ENCODE measurements at regions of chr1 and their contacts with region 1.

Region 1: DNA sequence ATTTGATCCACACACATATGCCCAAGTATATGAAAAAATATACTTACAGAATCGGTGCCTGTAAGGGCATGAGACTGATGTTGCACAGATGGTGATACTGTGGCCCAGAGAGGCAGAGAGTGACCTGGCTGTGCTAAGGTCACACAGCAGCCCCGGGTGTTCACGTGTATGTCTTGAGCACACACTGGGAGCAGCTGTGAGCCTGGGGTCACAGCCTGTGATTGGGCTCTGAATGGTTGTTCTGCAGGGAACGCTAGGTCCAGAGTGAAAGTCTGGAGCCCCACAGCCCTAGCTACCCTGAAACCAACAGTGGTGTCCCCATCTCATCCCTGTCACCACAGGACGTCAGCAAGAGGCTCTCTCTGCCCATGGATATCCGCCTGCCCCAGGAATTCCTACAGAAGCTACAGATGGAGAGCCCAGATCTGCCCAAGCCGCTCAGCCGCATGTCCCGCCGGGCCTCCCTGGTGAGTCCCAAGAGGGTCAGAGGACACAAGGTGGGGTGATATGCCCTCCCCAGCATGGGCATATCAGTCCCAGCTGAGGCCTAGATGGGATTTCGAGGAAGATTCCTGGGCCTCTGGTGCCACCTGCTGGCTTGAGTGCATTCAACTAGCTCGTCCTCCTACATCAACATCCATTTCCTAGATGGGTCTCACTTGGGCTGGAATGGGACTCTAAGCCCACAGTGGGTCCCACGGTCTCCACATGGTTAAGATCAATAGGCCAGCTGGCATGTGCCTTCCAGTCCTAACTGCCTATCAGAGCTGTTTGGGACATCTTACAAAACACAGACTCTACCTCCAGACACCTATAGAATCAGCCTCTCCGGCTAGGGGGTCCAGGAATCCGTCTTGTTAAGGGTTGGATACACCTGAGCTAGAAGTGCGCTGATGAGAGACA is 19.7 kb downstream of the CDK18 start:
- DNase-seq: peak; percentile 38
- H3K4me3 Mint-ChIP-seq: no peak overlapping the region
- H3K27ac Mint-ChIP-seq: no peak overlapping the region
- H3K4me1 Mint-ChIP-seq: no peaks in the 10 kb centered on the region
- H3K27me3 Mint-ChIP-seq: no peaks in the 10 kb centered on the region

Region 2: GRCh38 chr1:205248793-205249601 is 275.1 kb before region 1 on chr1:
- intact Hi-C with region 1: no loop called
- DNase-seq: no peak
- H3K4me3 Mint-ChIP-seq: no peak overlapping the region
- H3K27ac Mint-ChIP-seq: no peak overlapping the region
- H3K4me1 Mint-ChIP-seq: peaks cover 18% of the 10 kb centered on the region
- H3K27me3 Mint-ChIP-seq: no peaks in the 10 kb centered on the region

Region 3: GRCh38 chr1:205354259-205354904 is 169.8 kb before region 1 on chr1:
- intact Hi-C with region 1: loop called (anchors 2 kb)
- DNase-seq: peak; percentile 24
- H3K4me3 Mint-ChIP-seq: no peak overlapping the region
- H3K27ac Mint-ChIP-seq: no peak overlapping the region
- H3K4me1 Mint-ChIP-seq: no peaks in the 10 kb centered on the region
- H3K27me3 Mint-ChIP-seq: peaks cover 15% of the 10 kb centered on the region

Region 4: DNA sequence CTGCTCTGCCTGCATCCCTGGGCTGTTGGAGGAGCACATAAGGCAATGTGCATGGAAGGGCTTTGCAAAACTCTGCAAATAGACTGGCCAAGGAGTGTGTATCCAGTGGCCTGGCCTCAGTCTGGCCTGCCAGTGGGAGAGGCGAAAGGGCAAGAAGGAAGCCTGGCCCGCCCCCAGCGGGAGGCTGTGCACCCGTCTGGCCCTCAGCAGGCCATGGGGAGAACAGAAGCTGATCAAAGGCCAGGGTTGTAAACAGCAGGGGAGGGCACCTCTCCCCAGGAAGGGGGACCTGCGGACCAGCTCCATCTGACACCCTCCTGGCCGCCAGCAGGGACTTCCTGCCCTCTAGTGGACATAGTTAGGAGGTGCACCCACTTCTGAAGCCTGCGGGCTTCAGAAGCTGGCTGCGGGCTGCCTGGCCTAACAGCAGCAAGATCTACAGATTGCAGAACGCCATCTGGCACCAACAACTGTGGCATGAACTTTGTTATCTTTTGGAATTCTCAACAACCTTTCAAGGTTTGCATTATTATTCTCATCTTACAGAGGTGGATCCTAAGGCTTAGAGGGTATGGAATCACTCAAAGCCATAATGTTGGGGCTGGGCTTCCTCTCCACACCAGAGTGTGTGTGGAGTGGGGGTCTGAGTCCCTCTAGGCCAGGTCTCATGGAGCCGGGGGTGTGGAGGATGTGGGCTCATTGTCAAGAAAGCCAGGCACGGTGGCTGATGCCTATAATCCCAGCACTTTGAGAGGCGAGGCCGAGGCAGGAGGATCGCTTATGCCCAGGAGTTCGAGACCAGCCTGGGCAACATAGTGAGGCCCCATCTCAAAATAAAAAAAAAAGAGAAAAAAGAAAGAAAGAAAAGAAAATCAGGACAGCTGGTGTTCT is 38.6 kb before region 1 on chr1:
- intact Hi-C with region 1: loop called (anchors 1 kb)
- DNase-seq: peak; percentile 53
- H3K4me3 Mint-ChIP-seq: no peak overlapping the region
- H3K27ac Mint-ChIP-seq: no peak overlapping the region
- H3K4me1 Mint-ChIP-seq: peaks cover 11% of the 10 kb centered on the region
- H3K27me3 Mint-ChIP-seq: peaks cover 50% of the 10 kb centered on the region

Region 5: DNA sequence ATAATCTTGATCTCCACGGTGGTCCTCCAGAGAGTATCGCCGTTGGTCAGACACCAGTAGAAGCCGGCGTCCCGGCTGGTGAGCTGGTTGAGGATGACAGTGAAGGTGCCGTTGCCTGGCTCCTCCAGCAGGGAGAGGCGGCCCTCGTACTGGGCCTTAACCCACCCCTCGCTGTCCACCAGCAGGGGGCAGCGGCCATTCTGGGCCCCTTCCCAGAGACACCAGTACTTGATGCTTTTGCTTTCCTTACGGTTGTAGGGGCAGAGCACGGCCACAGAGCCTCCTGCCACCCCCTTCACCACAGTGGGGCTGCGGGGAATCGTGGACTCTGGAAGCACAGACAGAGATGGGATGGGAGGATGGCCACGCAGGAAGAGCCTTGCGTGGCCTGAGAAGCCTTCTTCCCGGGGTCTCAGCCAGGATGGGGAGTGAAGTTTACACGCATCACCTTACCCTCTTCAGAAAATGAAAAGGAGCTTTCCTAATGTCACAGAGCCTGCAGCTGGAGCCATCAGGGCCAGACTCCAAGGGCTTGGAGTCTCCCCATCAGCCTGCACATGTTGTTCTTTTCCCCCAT is 1411.4 kb after region 1 on chr1:
- intact Hi-C with region 1: no loop called
- DNase-seq: peak; percentile 29
- H3K4me3 Mint-ChIP-seq: no peak overlapping the region
- H3K27ac Mint-ChIP-seq: no peak overlapping the region
- H3K4me1 Mint-ChIP-seq: peaks cover 11% of the 10 kb centered on the region
- H3K27me3 Mint-ChIP-seq: peaks cover 2% of the 10 kb centered on the region